HepG2 (cell line): ENCODE measurements at regions of chr12 and their contacts with region 1.

Region 1: GRCh38 chr12:108342985-108343384 is 3.9 kb upstream of the CMKLR1 start:
- DNase-seq: no peak
- ATAC-seq: no peak
- H3K4me3 ChIP-seq: no peak overlapping the region
- H3K27ac ChIP-seq: no peak overlapping the region
- H3K4me1 ChIP-seq: no peaks in the 10 kb centered on the region
- H3K27me3 ChIP-seq: peaks cover 5 to 21% of the 10 kb centered on the region in 2 experiments; a peak in 4 of 5 replicates
- CTCF ChIP-seq: no peak
- EP300 ChIP-seq: no peak
- POLR2A ChIP-seq: no peak
- RAD21 ChIP-seq: no peak

Region 2: GRCh38 chr12:108271951-108272872 is 70.8 kb before region 1 on chr12:
- CTCF ChIA-PET with region 1: no interaction called
- POLR2A ChIA-PET with region 1: no interaction called
- in situ Hi-C with region 1: no loop called
- intact Hi-C with region 1: loop called (anchors 2 kb)
- DNase-seq: no peak
- ATAC-seq: no peak
- H3K4me3 ChIP-seq: no peak overlapping the region
- H3K27ac ChIP-seq: no peak overlapping the region
- H3K4me1 ChIP-seq: no peaks in the 10 kb centered on the region
- H3K27me3 ChIP-seq: no peaks in the 10 kb centered on the region
- CTCF ChIP-seq: no peak
- EP300 ChIP-seq: no peak
- POLR2A ChIP-seq: no peak
- RAD21 ChIP-seq: no peak